ENCODE measurements at regions of chr6 and their contacts with region 1.

Region 1: DNA sequence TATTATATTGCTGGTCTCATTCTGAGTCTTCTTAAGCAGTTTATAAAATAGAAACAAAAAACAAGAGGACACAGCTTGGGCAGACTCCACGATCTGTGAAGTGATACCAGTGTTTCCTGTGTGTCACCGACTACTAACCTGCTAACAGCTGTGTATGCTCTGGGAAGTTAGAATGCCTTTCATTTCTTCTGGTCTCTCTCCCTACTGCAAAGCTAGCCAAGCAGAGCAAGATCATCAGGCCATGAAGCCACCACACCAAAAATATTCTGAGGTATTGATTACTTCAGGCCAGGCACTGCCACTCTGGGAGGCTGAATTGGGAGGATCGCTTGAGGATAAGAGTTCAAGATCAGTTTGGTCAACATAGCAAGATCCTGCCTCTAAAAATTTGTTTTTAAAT is 46.9 kb upstream of the SMIM29 start:
- DNase-seq: no peak
- ATAC-seq: peak; percentile 83 to 93 (median 88)
- H3K4me3 ChIP-seq: peak overlapping the region; percentile 30
- H3K27ac ChIP-seq: peak overlapping the region; percentile 87
- H3K4me1 ChIP-seq: peaks cover 70% of the 10 kb centered on the region
- H3K27me3 ChIP-seq: no peaks in the 10 kb centered on the region
- CTCF ChIP-seq: no peak

Region 2: DNA sequence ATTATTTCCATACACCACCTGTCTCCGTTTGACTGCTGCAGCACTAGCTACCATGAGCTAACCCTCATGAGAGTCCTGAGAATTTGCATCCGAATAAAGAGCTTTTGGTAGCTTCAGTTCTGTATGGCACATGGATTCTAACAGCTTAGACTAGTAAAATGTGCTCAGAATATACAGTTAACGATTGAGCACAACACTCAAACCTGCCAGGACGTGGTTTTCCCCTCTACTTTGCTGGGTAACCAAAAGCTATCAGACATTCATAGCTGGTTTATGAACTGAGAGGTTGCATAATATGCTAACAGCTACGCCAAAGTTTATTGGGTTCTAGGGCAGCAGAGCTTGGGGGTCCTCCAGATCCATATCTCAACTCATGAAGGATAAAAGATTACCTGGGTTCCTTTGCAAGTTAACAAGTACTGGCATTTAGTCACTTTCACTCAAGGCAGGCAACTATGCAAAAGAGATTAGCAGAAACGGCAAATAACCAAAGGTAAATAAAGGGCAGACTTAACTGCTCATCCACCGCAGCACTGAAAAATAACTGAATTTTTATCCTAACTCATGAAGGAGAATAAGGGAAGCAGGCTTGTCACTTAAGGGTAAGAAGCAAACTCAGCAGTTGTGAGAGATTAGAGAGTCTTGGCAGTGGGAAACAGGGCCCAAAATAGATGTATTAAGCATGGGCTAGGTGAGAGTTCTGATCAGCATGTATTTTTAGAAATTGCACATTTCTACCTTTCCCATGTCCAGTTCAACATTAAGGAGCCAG is 67.4 kb after region 1 on chr6:
- intact Hi-C with region 1: loop called in 1 of 2 experiments (anchors 5 kb)
- DNase-seq: no peak
- ATAC-seq: peak; percentile 90 to 96 (median 94)
- H3K4me3 ChIP-seq: peak overlapping the region; percentile 43
- H3K27ac ChIP-seq: peak overlapping the region; percentile 89
- H3K4me1 ChIP-seq: peaks cover 50% of the 10 kb centered on the region
- H3K27me3 ChIP-seq: no peaks in the 10 kb centered on the region
- CTCF ChIP-seq: no peak

Measured in psoas muscle (tissue), 8 donors.